Cardiac septum (tissue), 1 donor: ENCODE measurements at regions of chr19 and their contacts with region 1.

Region 1: DNA sequence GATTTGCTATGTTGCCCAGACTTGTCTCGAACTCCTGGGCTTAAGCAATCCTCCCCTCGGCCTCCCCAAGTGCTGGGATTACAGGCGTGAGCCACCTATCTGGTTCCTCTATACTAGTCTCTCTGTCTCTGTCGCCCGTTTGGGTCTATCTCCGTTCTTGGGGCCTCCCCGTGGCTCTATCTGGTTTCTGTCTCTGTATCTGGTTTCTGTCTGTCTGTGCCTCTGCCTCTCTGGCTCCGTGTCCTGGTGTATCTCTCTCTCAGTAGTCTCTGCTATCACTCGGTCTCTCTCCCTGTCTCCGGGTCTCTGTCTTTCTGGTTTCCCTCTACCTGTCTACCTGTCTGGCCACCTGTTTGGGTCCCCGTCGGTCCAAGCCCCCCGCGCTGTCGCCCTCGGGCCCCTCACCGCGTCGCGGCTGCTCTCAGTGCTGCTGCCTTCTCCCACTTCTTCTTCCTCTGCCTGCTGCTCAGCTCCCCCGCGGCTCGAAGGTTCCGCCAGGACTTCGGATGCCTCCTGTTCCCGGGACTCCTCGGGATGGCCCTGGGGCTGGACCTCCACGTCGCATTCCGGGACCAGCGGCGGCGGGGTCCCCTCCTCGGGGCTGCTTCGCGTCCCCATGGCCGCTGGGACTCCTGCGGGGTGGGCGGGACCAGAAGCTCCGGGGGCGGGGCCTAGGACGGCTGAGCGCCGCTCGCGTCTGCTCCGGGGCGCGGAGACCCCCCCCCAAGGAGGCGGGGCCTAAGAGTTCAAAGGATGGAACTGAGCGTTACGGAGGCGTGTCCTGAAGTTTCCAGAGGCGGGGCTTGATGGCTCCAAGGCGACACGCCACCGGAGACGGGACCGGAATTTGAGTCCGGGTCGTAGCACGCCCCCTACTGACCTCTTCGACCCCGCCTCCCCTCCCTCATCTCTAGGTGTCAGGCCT is 783 bp downstream of the PHLDB3 start:
- DNase-seq: peak; percentile 97

Region 2: GRCh38 chr19:43463381-43464136 is 40.2 kb before region 1 on chr19:
- intact Hi-C with region 1: loop called (anchors 5 kb)
- DNase-seq: peak; percentile 99

Region 3: DNA sequence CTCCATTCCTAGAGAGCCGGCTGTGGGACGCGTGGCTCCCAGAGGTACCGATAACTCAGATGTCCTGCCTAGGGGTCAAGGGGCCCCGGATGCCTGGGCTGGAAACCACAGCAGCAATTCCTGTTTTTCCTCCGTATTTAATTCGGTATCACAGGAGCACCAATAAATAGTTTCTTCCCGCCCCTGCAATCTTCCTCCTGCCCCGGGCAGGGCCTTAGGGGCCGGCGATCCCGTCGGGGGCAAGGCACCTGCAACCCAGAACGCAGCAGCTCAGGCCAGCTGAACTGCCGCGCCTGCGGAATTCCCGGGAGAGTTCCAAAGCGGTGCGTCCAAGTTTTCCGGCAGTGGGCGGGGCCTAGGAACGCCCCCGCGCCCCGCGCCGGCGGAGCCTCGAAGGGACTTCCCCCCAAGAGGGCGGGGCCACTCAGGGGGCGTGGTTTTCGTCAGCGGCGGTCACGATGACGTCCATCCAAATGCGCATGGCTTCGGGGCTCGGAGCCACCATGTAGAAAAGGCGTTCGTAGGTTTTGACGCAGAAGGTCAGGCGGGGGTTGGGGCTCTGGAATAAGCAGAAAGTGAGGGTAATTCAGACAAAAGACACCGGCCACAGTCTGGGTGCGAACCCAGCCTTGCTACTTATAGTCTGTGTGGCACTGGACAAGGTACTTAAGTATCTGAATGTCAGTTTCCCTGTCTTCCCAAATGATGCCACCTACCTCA is 28.6 kb before region 1 on chr19:
- intact Hi-C with region 1: loop called (anchors 2 kb)
- DNase-seq: peak; percentile 98

Region 4: DNA sequence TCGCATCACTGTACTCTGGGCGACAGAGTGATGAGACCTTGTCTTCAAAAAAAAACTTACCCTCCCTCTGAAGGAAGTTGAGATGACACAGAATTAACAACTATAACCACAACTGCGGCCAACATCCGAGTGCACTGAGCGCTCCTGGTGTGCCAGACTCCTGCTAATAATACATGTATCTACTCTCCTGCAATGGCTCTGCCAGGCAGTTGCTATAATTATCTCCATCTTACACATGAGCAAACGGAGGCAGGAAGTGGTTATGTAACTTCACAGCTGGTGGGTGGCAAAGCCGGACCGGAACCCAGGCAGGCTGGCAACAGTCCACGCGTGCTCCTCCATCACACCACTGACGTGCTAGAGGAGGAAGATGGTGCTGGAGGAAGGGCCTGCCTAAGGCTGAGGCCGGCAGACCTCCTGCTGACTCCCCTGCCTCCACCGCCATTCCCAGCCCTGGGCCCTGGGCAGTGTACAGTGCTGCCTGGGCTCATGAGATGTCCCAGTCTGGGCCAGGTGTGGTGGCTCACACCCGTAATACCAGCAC is 59.0 kb after region 1 on chr19:
- intact Hi-C with region 1: no loop called
- DNase-seq: peak; percentile 91